ENCODE measurements at regions of chr10 and their contacts with region 1.

Region 1: GRCh38 chr10:113441220-113441619 is 111.6 kb upstream of the HABP2 start:
- DNase-seq: no peak
- ATAC-seq: peak in 2 of 4 donors; percentile 32 to 62
- H3K4me3 ChIP-seq: no peak overlapping the region
- H3K27ac ChIP-seq: no peak overlapping the region
- H3K4me1 ChIP-seq: no peaks in the 10 kb centered on the region
- H3K27me3 ChIP-seq: no peaks in the 10 kb centered on the region
- CTCF ChIP-seq: peak; percentile 28

Region 2: DNA sequence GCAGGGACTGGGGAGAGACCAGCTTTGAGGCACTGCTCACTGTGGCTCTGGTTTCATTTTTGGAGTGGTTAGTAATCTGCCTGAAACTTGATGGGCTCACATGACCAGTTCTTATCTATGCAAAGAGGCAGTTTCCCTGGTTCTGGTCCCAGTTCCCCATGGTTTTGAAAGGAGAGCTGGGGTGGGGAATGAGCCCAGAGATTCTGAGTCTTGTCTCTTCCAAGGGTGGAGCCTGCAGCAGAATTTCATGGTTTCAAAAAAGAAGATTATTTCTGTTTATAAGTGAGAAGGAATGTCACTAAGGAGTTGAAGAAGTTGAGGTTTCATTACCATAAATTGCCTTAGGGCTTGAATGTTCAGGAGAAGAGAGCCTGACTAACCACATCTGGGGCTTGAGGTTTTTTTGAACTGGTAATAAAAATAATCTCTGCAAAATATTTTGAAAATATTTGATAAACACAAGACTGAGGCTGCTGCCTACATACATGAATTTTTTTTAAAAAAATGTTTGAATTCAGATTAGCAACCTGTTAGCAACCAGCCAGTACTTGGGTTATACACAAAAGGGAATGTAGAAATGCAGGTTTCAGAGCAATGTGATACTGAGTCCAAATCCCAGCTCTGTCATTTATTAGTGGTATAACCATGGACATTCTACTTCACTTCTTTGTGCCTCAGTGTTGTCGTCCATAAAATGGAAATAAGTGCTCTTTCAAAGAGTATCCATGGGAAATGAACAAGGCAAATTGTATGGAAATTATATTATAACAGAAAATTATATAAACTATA is 78.4 kb before region 1 on chr10:
- intact Hi-C with region 1: no loop called
- DNase-seq: no peak
- ATAC-seq: no peak
- H3K4me3 ChIP-seq: no peak overlapping the region
- H3K27ac ChIP-seq: no peak overlapping the region
- H3K4me1 ChIP-seq: no peaks in the 10 kb centered on the region
- H3K27me3 ChIP-seq: no peaks in the 10 kb centered on the region
- CTCF ChIP-seq: no peak

Region 3: DNA sequence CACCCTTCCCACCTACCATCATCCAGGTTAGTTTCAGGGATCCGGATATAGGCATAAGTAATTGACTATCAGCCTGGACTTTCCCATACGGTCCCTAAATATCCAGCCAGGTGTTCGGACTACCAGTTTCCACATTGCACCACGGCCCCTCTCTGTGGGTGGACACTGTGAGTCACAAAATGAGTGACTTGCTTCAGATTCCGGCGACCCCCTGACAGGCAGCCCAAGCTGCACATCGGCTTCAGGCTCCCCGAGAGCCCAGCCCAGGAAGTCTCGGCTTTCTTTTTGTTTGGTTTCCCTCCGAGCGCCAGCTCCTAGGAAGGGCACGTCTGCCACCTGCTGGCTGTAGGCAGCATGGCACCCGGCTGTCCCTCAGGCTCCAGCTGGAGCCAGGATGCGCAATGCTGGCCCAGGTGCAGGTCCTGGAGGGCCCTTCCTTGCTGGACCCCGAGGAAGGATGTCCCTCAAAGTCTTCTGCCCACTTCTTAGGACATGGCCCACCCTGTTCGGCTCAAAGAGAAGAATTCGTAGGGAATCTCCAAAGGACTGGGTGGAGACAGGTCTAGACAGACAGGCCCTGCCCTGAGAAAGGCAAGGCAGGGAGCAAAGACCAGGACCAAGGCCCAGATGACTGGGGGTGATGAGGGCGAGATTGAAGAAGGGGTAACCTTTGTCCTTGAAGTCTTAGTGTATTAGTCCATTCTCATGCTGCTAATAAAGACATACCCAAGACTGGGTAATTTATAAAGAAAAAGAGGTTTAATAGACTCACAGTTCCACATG is 122.3 kb after region 1 on chr10:
- intact Hi-C with region 1: loop called in 1 of 2 experiments (anchors 5 kb)
- DNase-seq: peak; percentile 73 to 89
- ATAC-seq: peak; percentile 88 to 95 (median 89)
- H3K4me3 ChIP-seq: peak overlapping the region; percentile 46
- H3K27ac ChIP-seq: no peak overlapping the region
- H3K4me1 ChIP-seq: peaks cover 30% of the 10 kb centered on the region
- H3K27me3 ChIP-seq: no peaks in the 10 kb centered on the region
- CTCF ChIP-seq: peak; percentile 99

Measured in psoas muscle (tissue), 8 donors.